CD8-positive, alpha-beta memory T cell (primary cell): ENCODE measurements at regions of chr19 and their contacts with region 1.

Region 1: DNA sequence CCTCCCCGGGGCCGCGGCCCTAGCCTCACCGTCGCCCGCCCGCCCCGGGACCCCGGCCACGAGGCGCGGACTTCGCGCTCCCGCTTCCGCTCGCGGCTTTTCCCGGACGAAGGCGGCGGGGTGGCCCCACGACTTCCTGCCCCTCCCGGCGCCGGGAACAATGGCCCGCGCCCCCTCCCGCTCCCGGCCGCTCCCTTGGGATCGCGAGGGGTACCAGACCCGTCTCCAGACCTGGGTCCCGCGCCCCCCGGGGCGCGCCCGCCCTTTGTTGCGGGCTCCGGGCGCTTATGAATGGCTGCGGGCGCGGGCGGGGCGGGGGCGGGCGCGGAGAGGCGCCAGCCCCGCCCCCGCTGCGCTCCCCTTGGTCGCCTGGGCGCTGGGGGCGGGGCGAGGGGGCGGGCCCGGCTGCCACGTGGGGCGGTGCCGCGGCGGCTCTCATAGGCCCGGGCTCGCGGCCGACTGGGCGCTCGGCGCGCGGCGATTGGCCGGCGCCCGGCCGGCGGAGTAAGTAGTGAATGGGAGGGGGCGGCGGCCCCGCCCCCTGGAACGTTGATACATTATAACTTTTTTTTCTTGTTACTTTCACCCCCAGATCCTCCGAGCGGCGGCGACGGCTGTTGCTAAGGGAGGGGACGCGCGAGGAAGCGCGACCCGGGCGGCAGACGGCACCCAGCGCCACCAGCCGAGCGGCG is 1.1 kb downstream of the MIDN start:
- DNase-seq: peak; percentile 88 to 96 (median 94)
- H3K4me3 ChIP-seq: peak overlapping the region; percentile 62
- H3K4me3 Mint-ChIP-seq: peak overlapping the region; percentile 81 to 100 (median 90)
- H3K27ac ChIP-seq: peak overlapping the region; percentile 92
- H3K27ac Mint-ChIP-seq: peak overlapping the region; percentile 80 to 100 (median 90)
- H3K4me1 ChIP-seq: peaks cover 32% of the 10 kb centered on the region
- H3K4me1 Mint-ChIP-seq: peaks cover 4 to 20% (median 9%) of the 10 kb centered on the region in 3 donors
- H3K27me3 ChIP-seq: no peaks in the 10 kb centered on the region
- H3K27me3 Mint-ChIP-seq: peaks cover 0 to 8% of the 10 kb centered on the region in 2 donors

Region 2: GRCh38 chr19:1237754-1238368 is 11.6 kb before region 1 on chr19 and contains the start of gene CBARP:
- CTCF ChIA-PET with region 1: no interaction called
- POLR2A ChIA-PET with region 1: no interaction called
- DNase-seq: peak in 3 of 5 donors; percentile 35 to 53 (median 46)
- H3K4me3 ChIP-seq: no peak within 1 kb of the TSS
- H3K4me3 Mint-ChIP-seq: peak within 1 kb of the TSS; percentile 54 to 92 (median 83)
- H3K27ac ChIP-seq: no peak within 1 kb of the TSS
- H3K27ac Mint-ChIP-seq: peak within 1 kb of the TSS; percentile 37 to 91 (median 87)
- H3K4me1 ChIP-seq: peaks cover 29% of the 10 kb centered on the region
- H3K4me1 Mint-ChIP-seq: peaks cover 16 to 38% (median 19%) of the 10 kb centered on the region in 3 donors
- H3K27me3 ChIP-seq: no peaks in the 10 kb centered on the region
- H3K27me3 Mint-ChIP-seq: peaks cover 6 to 8% of the 10 kb centered on the region in 2 donors
- total RNA-seq, gene CBARP: 0.22 to 0.80 TPM

Region 3: DNA sequence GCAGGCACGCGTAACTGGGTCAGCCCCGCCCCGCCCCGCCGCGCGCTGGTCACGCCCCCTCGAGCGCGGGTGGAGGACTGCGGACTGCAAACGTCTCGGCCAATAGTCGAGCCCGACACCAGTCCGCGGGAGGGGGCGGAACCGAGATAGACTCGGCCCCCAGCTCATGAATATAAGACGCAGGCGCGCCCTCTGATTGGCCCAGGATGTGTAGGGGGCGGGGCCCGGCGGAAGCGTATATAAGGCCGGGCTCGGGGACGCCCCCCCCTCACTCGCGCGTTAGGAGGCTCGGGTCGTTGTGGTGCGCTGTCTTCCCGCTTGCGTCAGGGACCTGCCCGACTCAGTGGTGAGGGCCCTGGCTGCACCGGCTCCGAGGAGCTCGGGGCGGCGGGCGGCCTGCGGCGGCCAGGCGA is 19.6 kb after region 1 on chr19 and contains the start of gene CIRBP:
- CTCF ChIA-PET with region 1: interaction called, 484 read pairs
- POLR2A ChIA-PET with region 1: interaction called, 280 read pairs
- DNase-seq: peak; percentile 98 to 100 (median 99)
- H3K4me3 ChIP-seq: peak within 1 kb of the TSS; percentile 99
- H3K4me3 Mint-ChIP-seq: peak within 1 kb of the TSS; percentile 86 to 92 (median 87)
- H3K27ac ChIP-seq: peak within 1 kb of the TSS; percentile 90
- H3K27ac Mint-ChIP-seq: peak within 1 kb of the TSS; percentile 90 to 98 (median 94)
- H3K4me1 ChIP-seq: peaks cover 75% of the 10 kb centered on the region
- H3K4me1 Mint-ChIP-seq: peaks cover 58 to 83% (median 58%) of the 10 kb centered on the region in 3 donors
- H3K27me3 ChIP-seq: no peaks in the 10 kb centered on the region
- H3K27me3 Mint-ChIP-seq: peaks cover 0 to 10% of the 10 kb centered on the region in 2 donors
- total RNA-seq, gene CIRBP: 253 to 258 TPM

Region 4: DNA sequence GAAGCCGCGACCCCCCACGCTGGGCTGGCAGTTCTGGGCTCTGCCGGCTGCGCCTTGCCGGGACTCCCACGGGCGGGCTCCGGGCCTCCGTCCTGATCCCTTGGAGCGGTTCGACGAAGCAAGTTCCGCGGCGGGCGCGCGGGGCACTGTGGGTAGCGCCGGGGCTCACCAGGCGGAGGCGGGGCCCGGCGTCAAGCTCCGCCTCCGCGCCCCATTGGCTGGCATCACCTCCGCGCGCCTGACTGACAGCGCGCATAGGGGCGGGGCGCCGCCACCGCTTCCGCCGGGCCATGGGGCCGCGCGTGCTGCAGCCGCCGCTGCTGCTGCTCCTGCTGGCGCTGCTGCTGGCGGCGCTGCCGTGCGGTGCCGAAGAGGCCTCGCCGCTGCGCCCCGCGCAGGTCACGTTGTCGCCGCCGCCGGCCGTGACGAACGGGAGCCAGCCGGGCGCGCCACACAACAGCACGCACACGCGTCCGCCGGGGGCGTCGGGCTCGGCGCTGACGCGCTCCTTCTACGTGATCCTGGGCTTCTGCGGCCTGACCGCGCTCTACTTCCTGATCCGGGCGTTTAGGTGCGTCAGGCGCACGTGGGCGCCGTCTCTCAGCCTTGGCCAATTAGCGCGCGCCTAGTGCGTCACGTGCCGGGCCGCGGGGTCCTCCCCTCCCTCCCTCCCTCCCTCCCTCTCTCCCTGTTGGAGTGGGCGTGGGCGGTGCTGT is 26.0 kb after region 1 on chr19 and contains the start of gene FAM174C:
- CTCF ChIA-PET with region 1: interaction called, 15 read pairs
- POLR2A ChIA-PET with region 1: interaction called, 17 read pairs
- DNase-seq: peak; percentile 96 to 99 (median 97)
- H3K4me3 ChIP-seq: peak within 1 kb of the TSS; percentile 74
- H3K4me3 Mint-ChIP-seq: peak within 1 kb of the TSS; percentile 79 to 87 (median 84)
- H3K27ac ChIP-seq: peak within 1 kb of the TSS; percentile 92
- H3K27ac Mint-ChIP-seq: peak within 1 kb of the TSS; percentile 78 to 98 (median 93)
- H3K4me1 ChIP-seq: peaks cover 61% of the 10 kb centered on the region
- H3K4me1 Mint-ChIP-seq: peaks cover 48 to 61% (median 50%) of the 10 kb centered on the region in 3 donors
- H3K27me3 ChIP-seq: no peaks in the 10 kb centered on the region
- H3K27me3 Mint-ChIP-seq: peaks cover 0 to 6% of the 10 kb centered on the region in 2 donors
- total RNA-seq, gene FAM174C: 113 TPM